Naive thymus-derived CD4-positive, alpha-beta T cell (primary cell): ENCODE measurements at regions of chr21 and their contacts with region 1.

Region 1: DNA sequence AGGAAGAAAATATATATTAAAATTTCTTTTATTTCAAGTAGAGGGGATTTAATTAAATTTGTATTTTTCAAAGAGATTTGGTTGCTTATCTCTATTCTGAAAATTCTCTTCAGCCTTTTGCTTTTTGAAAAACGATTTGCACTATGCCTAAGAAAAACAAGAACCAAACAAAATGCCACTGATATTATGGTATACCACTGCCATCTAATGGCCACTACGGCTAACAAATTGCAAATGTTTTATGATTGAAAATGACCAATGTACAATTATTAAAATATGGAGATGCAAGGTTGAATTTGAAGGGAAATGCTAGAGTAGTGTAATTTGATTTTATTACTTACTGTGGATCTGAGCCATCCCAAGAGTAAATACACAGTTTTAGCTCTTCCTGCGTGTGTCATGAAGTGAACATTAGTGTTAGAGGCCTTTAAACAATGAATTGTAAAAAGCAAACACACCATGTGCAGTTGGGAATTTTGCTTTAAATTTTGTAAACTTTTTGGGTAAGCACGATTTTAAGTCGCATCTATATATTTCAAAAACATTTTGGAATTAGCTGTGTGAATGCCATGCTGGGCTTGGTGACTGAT is 137.4 kb upstream of the USP25 start:
- DNase-seq: peak in 5 of 9 donors; percentile 23 to 41 (median 29)
- ATAC-seq: peak; percentile 68
- H3K4me3 ChIP-seq: no peak overlapping the region
- H3K4me3 Mint-ChIP-seq: no peak overlapping the region
- H3K27ac ChIP-seq: no peak overlapping the region
- H3K27ac Mint-ChIP-seq: no peak overlapping the region
- H3K4me1 ChIP-seq: no peaks in the 10 kb centered on the region
- H3K4me1 Mint-ChIP-seq: no peaks in the 10 kb centered on the region
- H3K27me3 ChIP-seq: no peaks in the 10 kb centered on the region
- H3K27me3 Mint-ChIP-seq: peaks cover 0 to 20% (median 5%) of the 10 kb centered on the region in 5 donors

Region 2: GRCh38 chr21:14251336-14251735 is 1341.0 kb before region 1 on chr21:
- CTCF ChIA-PET with region 1: no interaction called
- POLR2A ChIA-PET with region 1: no interaction called
- intact Hi-C with region 1: loop called in 1 of 2 experiments (anchors 1 kb)
- DNase-seq: no peak
- ATAC-seq: no peak
- H3K4me3 ChIP-seq: no peak overlapping the region
- H3K4me3 Mint-ChIP-seq: no peak overlapping the region
- H3K27ac ChIP-seq: no peak overlapping the region
- H3K27ac Mint-ChIP-seq: no peak overlapping the region
- H3K4me1 ChIP-seq: no peaks in the 10 kb centered on the region
- H3K4me1 Mint-ChIP-seq: peaks cover 3 to 9% (median 5%) of the 10 kb centered on the region in 7 donors
- H3K27me3 ChIP-seq: peaks cover 0 to 5% of the 10 kb centered on the region in 2 donors
- H3K27me3 Mint-ChIP-seq: peaks cover 5 to 23% (median 13%) of the 10 kb centered on the region in 5 donors

Region 3: GRCh38 chr21:14259747-14260146 is 1332.6 kb before region 1 on chr21:
- CTCF ChIA-PET with region 1: interaction called, 5 read pairs
- POLR2A ChIA-PET with region 1: no interaction called
- intact Hi-C with region 1: loop called in 1 of 2 experiments (anchors 1 kb)
- DNase-seq: peak in 5 of 9 donors; percentile 13 to 28 (median 23)
- ATAC-seq: peak; percentile 59
- H3K4me3 ChIP-seq: no peak overlapping the region
- H3K4me3 Mint-ChIP-seq: no peak overlapping the region
- H3K27ac ChIP-seq: no peak overlapping the region
- H3K27ac Mint-ChIP-seq: no peak overlapping the region
- H3K4me1 ChIP-seq: no peaks in the 10 kb centered on the region
- H3K4me1 Mint-ChIP-seq: no peaks in the 10 kb centered on the region
- H3K27me3 ChIP-seq: no peaks in the 10 kb centered on the region
- H3K27me3 Mint-ChIP-seq: peaks cover 2 to 19% (median 12%) of the 10 kb centered on the region in 5 donors

Region 4: GRCh38 chr21:14306151-14306907 is 1286.0 kb before region 1 on chr21:
- CTCF ChIA-PET with region 1: no interaction called
- POLR2A ChIA-PET with region 1: no interaction called
- intact Hi-C with region 1: loop called in 1 of 2 experiments (anchors 5 kb)
- DNase-seq: peak in 1 of 9 donors; percentile 4
- ATAC-seq: no peak
- H3K4me3 ChIP-seq: no peak overlapping the region
- H3K4me3 Mint-ChIP-seq: no peak overlapping the region
- H3K27ac ChIP-seq: no peak overlapping the region
- H3K27ac Mint-ChIP-seq: no peak overlapping the region
- H3K4me1 ChIP-seq: no peaks in the 10 kb centered on the region
- H3K4me1 Mint-ChIP-seq: peaks cover 0 to 2% (median 0%) of the 10 kb centered on the region in 7 donors
- H3K27me3 ChIP-seq: no peaks in the 10 kb centered on the region
- H3K27me3 Mint-ChIP-seq: peaks cover 7 to 19% (median 12%) of the 10 kb centered on the region in 5 donors

Region 5: DNA sequence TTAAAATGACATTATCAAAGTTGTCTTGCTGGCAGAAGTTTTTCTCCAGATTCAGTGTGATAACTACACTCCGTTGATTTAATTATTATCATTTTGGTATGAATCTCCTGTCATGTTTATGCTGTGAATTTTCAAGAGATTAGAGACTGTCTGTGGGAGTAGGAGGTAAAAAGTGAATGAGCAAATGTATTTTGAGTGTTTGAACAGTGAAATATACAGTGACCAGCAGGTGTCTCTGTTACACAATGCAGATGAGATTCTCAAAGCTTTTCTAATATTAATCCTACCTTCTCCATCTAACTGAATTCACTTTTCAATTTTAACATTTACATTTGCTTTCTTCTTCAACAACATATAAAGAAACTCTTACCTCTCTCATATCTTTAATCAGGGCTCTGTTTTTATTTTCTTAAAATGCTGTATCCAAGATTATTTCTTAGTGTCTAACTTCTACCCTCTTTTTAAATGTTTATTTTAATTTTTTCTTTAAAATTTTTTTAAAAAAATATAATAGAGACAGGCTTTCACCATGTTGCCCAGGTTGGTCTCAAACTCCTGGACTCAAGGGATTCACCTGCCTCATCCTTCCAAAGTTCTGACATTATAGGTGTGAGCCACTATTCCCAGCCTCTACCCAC is 1188.6 kb before region 1 on chr21:
- CTCF ChIA-PET with region 1: no interaction called
- POLR2A ChIA-PET with region 1: no interaction called
- intact Hi-C with region 1: loop called (anchors 1 kb)
- DNase-seq: peak in 5 of 9 donors; percentile 19 to 55 (median 39)
- ATAC-seq: peak; percentile 79
- H3K4me3 ChIP-seq: no peak overlapping the region
- H3K4me3 Mint-ChIP-seq: no peak overlapping the region
- H3K27ac ChIP-seq: no peak overlapping the region
- H3K27ac Mint-ChIP-seq: no peak overlapping the region
- H3K4me1 ChIP-seq: no peaks in the 10 kb centered on the region
- H3K4me1 Mint-ChIP-seq: no peaks in the 10 kb centered on the region
- H3K27me3 ChIP-seq: no peaks in the 10 kb centered on the region
- H3K27me3 Mint-ChIP-seq: peaks cover 0 to 1% (median 0%) of the 10 kb centered on the region in 5 donors

Region 6: DNA sequence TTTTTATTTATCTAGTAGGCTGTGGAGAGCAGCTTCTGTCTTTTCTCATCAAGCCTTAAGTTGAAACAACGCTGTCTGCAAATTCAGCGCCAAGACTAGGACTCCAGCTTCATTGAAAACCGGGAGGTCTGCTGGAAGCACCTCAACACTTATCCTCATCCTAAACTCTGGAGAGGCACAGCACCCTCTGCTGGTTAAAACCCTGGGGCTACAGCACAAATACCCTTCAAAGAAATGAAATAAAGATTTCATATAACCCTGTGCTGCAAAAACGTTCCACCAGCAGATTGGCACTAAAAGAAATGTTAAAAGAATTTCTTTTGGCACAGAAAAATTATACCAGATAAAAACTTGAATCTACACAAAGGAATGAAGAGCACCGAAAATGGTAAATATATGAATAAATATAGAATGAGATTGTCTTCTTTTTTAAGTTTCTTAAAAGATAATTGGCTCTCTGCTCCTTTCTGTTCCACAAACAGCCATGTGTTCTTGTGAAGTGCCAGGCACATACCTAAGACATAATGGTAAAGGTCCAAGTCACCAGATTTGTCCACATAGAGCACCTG is 818.5 kb before region 1 on chr21:
- CTCF ChIA-PET with region 1: no interaction called
- POLR2A ChIA-PET with region 1: no interaction called
- intact Hi-C with region 1: loop called in 1 of 2 experiments (anchors 5 kb)
- DNase-seq: peak in 8 of 9 donors; percentile 8 to 57 (median 37)
- ATAC-seq: peak; percentile 74
- H3K4me3 ChIP-seq: no peak overlapping the region
- H3K4me3 Mint-ChIP-seq: no peak overlapping the region
- H3K27ac ChIP-seq: no peak overlapping the region
- H3K27ac Mint-ChIP-seq: no peak overlapping the region
- H3K4me1 ChIP-seq: no peaks in the 10 kb centered on the region
- H3K4me1 Mint-ChIP-seq: peaks cover 0 to 6% (median 0%) of the 10 kb centered on the region in 7 donors
- H3K27me3 ChIP-seq: peaks cover 0 to 3% of the 10 kb centered on the region in 2 donors
- H3K27me3 Mint-ChIP-seq: peaks cover 0 to 11% (median 0%) of the 10 kb centered on the region in 5 donors

Region 7: GRCh38 chr21:14864211-14865021 is 728.0 kb before region 1 on chr21:
- CTCF ChIA-PET with region 1: no interaction called
- POLR2A ChIA-PET with region 1: no interaction called
- intact Hi-C with region 1: loop called (anchors 1 to 2 kb)
- DNase-seq: peak in 7 of 9 donors; percentile 13 to 31 (median 24)
- ATAC-seq: peak; percentile 72
- H3K4me3 ChIP-seq: no peak overlapping the region
- H3K4me3 Mint-ChIP-seq: no peak overlapping the region
- H3K27ac ChIP-seq: no peak overlapping the region
- H3K27ac Mint-ChIP-seq: no peak overlapping the region
- H3K4me1 ChIP-seq: no peaks in the 10 kb centered on the region
- H3K4me1 Mint-ChIP-seq: peaks cover 0 to 12% (median 3%) of the 10 kb centered on the region in 7 donors
- H3K27me3 ChIP-seq: no peaks in the 10 kb centered on the region
- H3K27me3 Mint-ChIP-seq: peaks cover 0 to 5% (median 0%) of the 10 kb centered on the region in 5 donors

Region 8: DNA sequence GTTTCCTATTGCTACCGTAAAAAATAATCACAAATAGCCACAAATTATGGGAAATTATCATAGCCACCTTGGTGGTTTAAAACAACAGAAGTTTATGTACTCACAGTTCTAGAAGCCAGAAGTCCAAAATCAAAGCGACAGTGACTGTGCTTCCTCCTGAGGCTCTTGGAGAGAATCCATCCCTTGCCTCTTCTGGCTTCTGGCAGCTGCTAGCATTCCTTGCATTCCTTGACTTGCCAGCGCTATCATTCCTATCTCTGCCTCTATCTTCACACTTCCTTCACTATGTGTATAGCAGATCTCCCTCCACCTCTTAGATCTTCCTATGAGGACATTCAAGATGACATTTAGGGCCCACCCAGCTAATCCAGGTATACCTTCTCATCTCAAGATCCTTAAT is 42.7 kb before region 1 on chr21:
- CTCF ChIA-PET with region 1: no interaction called
- POLR2A ChIA-PET with region 1: no interaction called
- intact Hi-C with region 1: no loop called
- DNase-seq: no peak
- ATAC-seq: no peak
- H3K4me3 ChIP-seq: no peak overlapping the region
- H3K4me3 Mint-ChIP-seq: no peak overlapping the region
- H3K27ac ChIP-seq: no peak overlapping the region
- H3K27ac Mint-ChIP-seq: no peak overlapping the region
- H3K4me1 ChIP-seq: peaks cover 0 to 9% of the 10 kb centered on the region in 2 donors
- H3K4me1 Mint-ChIP-seq: peaks cover 4 to 23% (median 18%) of the 10 kb centered on the region in 7 donors
- H3K27me3 ChIP-seq: no peaks in the 10 kb centered on the region
- H3K27me3 Mint-ChIP-seq: peaks cover 0 to 6% (median 0%) of the 10 kb centered on the region in 5 donors

Region 9: GRCh38 chr21:15564907-15565306 is 27.5 kb before region 1 on chr21:
- CTCF ChIA-PET with region 1: no interaction called
- POLR2A ChIA-PET with region 1: no interaction called
- intact Hi-C with region 1: no loop called
- DNase-seq: no peak
- ATAC-seq: no peak
- H3K4me3 ChIP-seq: no peak overlapping the region
- H3K4me3 Mint-ChIP-seq: no peak overlapping the region
- H3K27ac ChIP-seq: no peak overlapping the region
- H3K27ac Mint-ChIP-seq: no peak overlapping the region
- H3K4me1 ChIP-seq: no peaks in the 10 kb centered on the region
- H3K4me1 Mint-ChIP-seq: no peaks in the 10 kb centered on the region
- H3K27me3 ChIP-seq: peaks cover 0 to 4% of the 10 kb centered on the region in 2 donors
- H3K27me3 Mint-ChIP-seq: peaks cover 13 to 29% (median 26%) of the 10 kb centered on the region in 5 donors

Region 10: DNA sequence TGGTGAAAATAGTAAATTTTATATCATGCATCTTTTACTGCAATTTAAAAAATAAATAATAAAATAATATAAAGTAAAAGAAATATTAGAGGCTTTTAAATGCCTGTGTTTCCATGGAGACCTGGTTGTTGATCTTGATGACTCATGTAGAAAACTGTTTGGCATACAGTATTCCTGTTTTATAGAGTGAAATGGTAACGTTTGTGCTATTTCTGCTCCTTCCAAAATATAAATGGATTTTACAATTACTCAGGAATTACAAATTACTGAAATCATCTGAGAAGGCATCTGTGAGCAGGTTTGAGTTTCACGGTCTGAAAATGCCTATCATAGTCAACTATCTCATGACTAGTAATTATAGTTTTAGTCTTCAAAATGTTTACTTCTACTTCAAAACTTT is 39.0 kb after region 1 on chr21:
- CTCF ChIA-PET with region 1: no interaction called
- POLR2A ChIA-PET with region 1: no interaction called
- intact Hi-C with region 1: no loop called
- DNase-seq: no peak
- ATAC-seq: no peak
- H3K4me3 ChIP-seq: no peak overlapping the region
- H3K4me3 Mint-ChIP-seq: no peak overlapping the region
- H3K27ac ChIP-seq: no peak overlapping the region
- H3K27ac Mint-ChIP-seq: no peak overlapping the region
- H3K4me1 ChIP-seq: no peaks in the 10 kb centered on the region
- H3K4me1 Mint-ChIP-seq: no peaks in the 10 kb centered on the region
- H3K27me3 ChIP-seq: no peaks in the 10 kb centered on the region
- H3K27me3 Mint-ChIP-seq: peaks cover 0 to 2% (median 0%) of the 10 kb centered on the region in 5 donors

Region 11: DNA sequence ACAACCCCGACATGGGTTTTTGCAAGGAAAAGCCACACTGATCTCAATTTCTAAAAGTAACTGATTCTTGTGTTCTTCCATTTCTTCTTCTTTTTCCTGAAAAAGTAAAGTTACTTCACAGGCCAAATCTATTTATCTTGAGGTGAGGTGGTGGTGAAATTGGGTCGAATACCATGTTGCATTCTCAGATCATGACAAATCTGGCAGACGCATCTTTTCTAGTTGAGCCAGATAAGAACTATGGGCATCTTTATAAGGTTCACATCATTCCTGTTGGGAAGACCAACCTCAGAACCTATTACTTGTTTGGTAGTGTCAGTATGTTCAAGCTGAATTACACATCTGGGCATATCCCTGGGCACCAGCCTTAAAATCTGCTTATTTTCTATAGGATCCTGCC is 58.8 kb after region 1 on chr21:
- CTCF ChIA-PET with region 1: no interaction called
- POLR2A ChIA-PET with region 1: no interaction called
- intact Hi-C with region 1: no loop called
- DNase-seq: no peak
- ATAC-seq: no peak
- H3K4me3 ChIP-seq: no peak overlapping the region
- H3K4me3 Mint-ChIP-seq: no peak overlapping the region
- H3K27ac ChIP-seq: no peak overlapping the region
- H3K27ac Mint-ChIP-seq: no peak overlapping the region
- H3K4me1 ChIP-seq: no peaks in the 10 kb centered on the region
- H3K4me1 Mint-ChIP-seq: no peaks in the 10 kb centered on the region
- H3K27me3 ChIP-seq: no peaks in the 10 kb centered on the region
- H3K27me3 Mint-ChIP-seq: peaks cover 0 to 7% (median 3%) of the 10 kb centered on the region in 5 donors